Calu3 (cell line): ENCODE measurements at regions of chr12 and their contacts with region 1.

Region 1: GRCh38 chr12:38527631-38528030 is 211.1 kb downstream of the ALG10B start:
- DNase-seq: no peak
- H3K4me3 Mint-ChIP-seq: no peak overlapping the region
- H3K27ac Mint-ChIP-seq: no peak overlapping the region
- H3K4me1 Mint-ChIP-seq: no peaks in the 10 kb centered on the region
- H3K27me3 Mint-ChIP-seq: no peaks in the 10 kb centered on the region
- CTCF ChIP-seq: no peak

Region 2: GRCh38 chr12:38469715-38470114 is 57.9 kb before region 1 on chr12:
- CTCF ChIA-PET with region 1: no interaction called
- intact Hi-C with region 1: loop called (anchors 10 kb)
- DNase-seq: no peak
- H3K4me3 Mint-ChIP-seq: no peak overlapping the region
- H3K27ac Mint-ChIP-seq: no peak overlapping the region
- H3K4me1 Mint-ChIP-seq: no peaks in the 10 kb centered on the region
- H3K27me3 Mint-ChIP-seq: no peaks in the 10 kb centered on the region
- CTCF ChIP-seq: no peak

Region 3: GRCh38 chr12:38543151-38543550 is 15.5 kb after region 1 on chr12:
- CTCF ChIA-PET with region 1: no interaction called
- intact Hi-C with region 1: no loop called
- DNase-seq: no peak
- H3K4me3 Mint-ChIP-seq: no peak overlapping the region
- H3K27ac Mint-ChIP-seq: no peak overlapping the region
- H3K4me1 Mint-ChIP-seq: peaks cover 13% of the 10 kb centered on the region
- H3K27me3 Mint-ChIP-seq: no peaks in the 10 kb centered on the region
- CTCF ChIP-seq: no peak